Activated naive CD8-positive, alpha-beta T cell treated with anti-CD3 and anti-CD28 coated beads, Interleukin-2, amount 10 ng/mL, durations not matched to agents 7 days and 5 days (primary cell): ENCODE measurements at regions of chr5 and their contacts with region 1.

Region 1: GRCh38 chr5:139458580-139459406 is 3.8 kb downstream of the ECSCR start:
- DNase-seq: peak; percentile 65
- ATAC-seq: peak; percentile 96
- H3K4me3 Mint-ChIP-seq: peak overlapping the region; percentile 69
- H3K27ac Mint-ChIP-seq: peak overlapping the region; percentile 87
- H3K4me1 Mint-ChIP-seq: peaks cover 40% of the 10 kb centered on the region
- H3K27me3 Mint-ChIP-seq: peaks cover 12% of the 10 kb centered on the region

Region 2: GRCh38 chr5:139403787-139404483 is 54.9 kb before region 1 on chr5 and contains the start of gene SPATA24:
- POLR2A ChIA-PET with region 1: no interaction called
- DNase-seq: peak; percentile 96
- ATAC-seq: peak; percentile 94
- H3K4me3 Mint-ChIP-seq: peak within 1 kb of the TSS; percentile 96
- H3K27ac Mint-ChIP-seq: peak within 1 kb of the TSS; percentile 100
- H3K4me1 Mint-ChIP-seq: peaks cover 35% of the 10 kb centered on the region
- H3K27me3 Mint-ChIP-seq: no peaks in the 10 kb centered on the region
- total RNA-seq, gene SPATA24: 6.3 to 6.4 TPM

Region 3: GRCh38 chr5:139439013-139439903 is 19.5 kb before region 1 on chr5 and contains the start of gene DNAJC18:
- POLR2A ChIA-PET with region 1: interaction called, 10 read pairs
- DNase-seq: peak; percentile 88
- ATAC-seq: peak; percentile 90
- H3K4me3 Mint-ChIP-seq: peak within 1 kb of the TSS; percentile 99
- H3K27ac Mint-ChIP-seq: peak within 1 kb of the TSS; percentile 100
- H3K4me1 Mint-ChIP-seq: peaks cover 27% of the 10 kb centered on the region
- H3K27me3 Mint-ChIP-seq: peaks cover 14% of the 10 kb centered on the region
- total RNA-seq, gene DNAJC18: 4.2 to 5.7 TPM

Region 4: GRCh38 chr5:139470821-139471300 is 12.1 kb after region 1 on chr5 and contains the start of gene SMIM33:
- POLR2A ChIA-PET with region 1: interaction called, 13 read pairs
- DNase-seq: peak; percentile 64
- ATAC-seq: peak; percentile 77
- H3K4me3 Mint-ChIP-seq: peak within 1 kb of the TSS; percentile 93
- H3K27ac Mint-ChIP-seq: peak within 1 kb of the TSS; percentile 98
- H3K4me1 Mint-ChIP-seq: peaks cover 52% of the 10 kb centered on the region
- H3K27me3 Mint-ChIP-seq: peaks cover 2% of the 10 kb centered on the region
- total RNA-seq, gene SMIM33: 0.34 to 0.44 TPM

Region 5: DNA sequence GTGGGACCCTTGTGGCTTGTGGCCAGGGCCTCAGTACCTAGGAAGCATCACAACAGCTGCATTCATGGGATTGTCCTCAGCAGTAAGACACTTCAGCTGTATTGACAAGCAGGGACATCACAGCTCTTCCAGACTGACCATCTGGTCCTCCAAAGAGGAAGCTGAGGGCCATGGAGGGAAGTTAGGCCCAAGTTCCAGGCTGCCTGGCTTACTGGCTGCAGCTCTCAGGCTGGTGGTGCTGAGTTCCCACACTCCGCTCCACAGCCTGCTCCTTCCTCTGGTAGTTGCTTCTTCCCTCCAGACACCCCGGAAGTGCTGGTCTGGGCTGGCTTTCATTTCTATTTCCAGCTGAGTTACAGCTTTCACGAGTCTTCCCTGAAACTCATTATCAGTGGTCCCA is 29.5 kb after region 1 on chr5:
- POLR2A ChIA-PET with region 1: no interaction called
- DNase-seq: no peak
- ATAC-seq: peak; percentile 34
- H3K4me3 Mint-ChIP-seq: no peak overlapping the region
- H3K27ac Mint-ChIP-seq: peak overlapping the region; percentile 74
- H3K4me1 Mint-ChIP-seq: peaks cover 17% of the 10 kb centered on the region
- H3K27me3 Mint-ChIP-seq: peaks cover 2% of the 10 kb centered on the region